T-cell (primary cell): ENCODE measurements at regions of chr3 and their contacts with region 1.

Region 1: GRCh38 chr3:71451060-71451459 is 132.5 kb downstream of the FOXP1 start:
- DNase-seq: peak in 1 of 35 experiments; percentile 51
- ATAC-seq: peak; percentile 31 to 63 (median 39)
- H3K4me3 ChIP-seq: no peak overlapping the region
- H3K4me3 Mint-ChIP-seq: peak overlapping the region; percentile 50 to 69 (median 59)
- H3K27ac ChIP-seq: peak overlapping the region; percentile 87
- H3K27ac Mint-ChIP-seq: peak overlapping the region; percentile 97 to 99
- H3K4me1 ChIP-seq: peaks cover 77 to 99% of the 10 kb centered on the region in 2 experiments
- H3K4me1 Mint-ChIP-seq: peaks cover 98 to 100% (median 99%) of the 10 kb centered on the region in 3 donors
- H3K27me3 ChIP-seq: no peaks in the 10 kb centered on the region
- H3K27me3 Mint-ChIP-seq: no peaks in the 10 kb centered on the region

Region 2: GRCh38 chr3:71406972-71407810 is 43.9 kb before region 1 on chr3:
- CTCF ChIA-PET with region 1: no interaction called
- POLR2A ChIA-PET with region 1: no interaction called
- DNase-seq: no peak
- ATAC-seq: no peak
- H3K4me3 ChIP-seq: no peak overlapping the region
- H3K4me3 Mint-ChIP-seq: no peak overlapping the region
- H3K27ac ChIP-seq: no peak overlapping the region
- H3K27ac Mint-ChIP-seq: peak overlapping the region; percentile 47 to 71
- H3K4me1 ChIP-seq: peaks cover 10 to 12% of the 10 kb centered on the region in 2 experiments
- H3K4me1 Mint-ChIP-seq: peaks cover 69 to 85% (median 83%) of the 10 kb centered on the region in 3 donors
- H3K27me3 ChIP-seq: no peaks in the 10 kb centered on the region
- H3K27me3 Mint-ChIP-seq: no peaks in the 10 kb centered on the region

Region 3: GRCh38 chr3:71485896-71486295 is 34.8 kb after region 1 on chr3:
- CTCF ChIA-PET with region 1: interaction called, 10 to 13 read pairs
- POLR2A ChIA-PET with region 1: interaction called, 6 to 12 read pairs
- DNase-seq: no peak
- ATAC-seq: no peak
- H3K4me3 ChIP-seq: no peak overlapping the region
- H3K4me3 Mint-ChIP-seq: peak overlapping the region; percentile 67 to 84 (median 77)
- H3K27ac ChIP-seq: peak overlapping the region; percentile 98
- H3K27ac Mint-ChIP-seq: peak overlapping the region; percentile 97 to 98
- H3K4me1 ChIP-seq: peaks cover 68 to 70% of the 10 kb centered on the region in 2 experiments
- H3K4me1 Mint-ChIP-seq: peaks cover 88 to 93% (median 89%) of the 10 kb centered on the region in 3 donors
- H3K27me3 ChIP-seq: no peaks in the 10 kb centered on the region
- H3K27me3 Mint-ChIP-seq: no peaks in the 10 kb centered on the region